ENCODE measurements at regions of chr4 and their contacts with region 1.

Region 1: DNA sequence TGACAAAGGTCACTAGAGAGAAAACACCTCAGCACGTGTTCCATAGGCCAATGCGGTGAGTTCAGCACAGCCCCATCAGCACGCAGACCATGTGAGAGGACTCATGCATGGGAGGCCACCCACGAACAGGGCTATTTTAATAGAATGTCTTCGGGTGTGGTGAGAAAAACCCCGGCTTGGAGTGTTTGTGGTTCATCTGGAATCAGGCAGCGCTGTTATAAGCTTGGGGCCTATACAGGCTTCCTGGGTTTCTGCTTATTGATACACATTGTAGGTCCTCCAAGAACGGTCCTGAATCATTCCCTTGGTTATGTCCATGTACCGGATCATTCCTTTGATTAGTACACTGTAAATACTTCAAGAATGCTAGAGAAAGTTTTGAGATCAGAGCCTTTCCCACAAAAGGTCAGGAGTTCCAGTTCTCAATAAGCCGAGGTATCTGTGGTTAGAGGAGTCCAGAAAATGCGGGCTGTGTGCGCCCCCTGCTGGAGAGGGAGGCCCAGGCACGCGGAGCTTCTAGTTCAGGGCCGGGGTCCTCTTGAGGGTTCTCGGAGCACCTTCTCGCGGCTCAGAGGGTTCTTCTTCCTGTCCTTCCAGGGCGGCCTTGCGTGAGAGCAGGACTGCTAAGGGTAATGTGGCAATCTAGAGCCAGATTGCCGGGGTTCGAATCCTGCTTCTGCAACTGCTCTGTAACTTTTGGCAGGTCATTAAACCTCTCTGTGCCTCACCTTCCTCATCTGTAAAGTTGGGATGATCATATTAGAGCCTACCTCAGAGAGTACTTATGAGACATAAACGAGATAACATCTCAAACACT is 51.8 kb downstream of the TLR10 start:
- DNase-seq: peak; percentile 79 to 87 (median 84)
- ATAC-seq: peak; percentile 85
- H3K4me3 ChIP-seq: no peak overlapping the region
- H3K27ac ChIP-seq: no peak overlapping the region
- H3K4me1 ChIP-seq: peaks cover 8% of the 10 kb centered on the region
- H3K27me3 ChIP-seq: no peaks in the 10 kb centered on the region
- CTCF ChIP-seq: peak; percentile 83 to 94 (median 91)
- POLR2A ChIP-seq: no peak

Region 2: DNA sequence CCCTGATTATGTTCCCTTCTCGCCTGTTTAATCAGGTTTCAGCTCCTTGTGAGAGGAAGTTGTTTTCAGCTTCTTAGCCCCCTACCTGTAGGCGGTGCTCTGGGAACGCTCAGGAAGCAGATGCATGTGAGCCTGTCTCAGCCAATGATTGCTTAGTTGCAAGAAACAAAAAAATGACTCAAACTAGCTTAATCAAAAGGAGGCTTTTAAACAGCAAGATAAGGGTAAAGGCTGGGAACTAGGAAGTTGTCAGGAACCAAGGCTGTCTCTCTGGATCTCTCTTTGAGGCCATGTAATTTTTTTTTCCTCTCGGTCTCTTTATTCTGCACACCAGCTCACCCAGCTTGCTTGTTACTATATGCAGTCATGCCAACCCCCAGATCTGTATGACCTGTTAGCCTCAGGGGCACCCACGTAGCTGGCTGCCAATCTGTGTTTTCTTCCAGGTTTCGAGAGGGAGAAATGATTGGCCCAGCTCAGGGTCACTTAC is 661.7 kb before region 1 on chr4:
- intact Hi-C with region 1: loop called (anchors 5 kb)
- DNase-seq: peak; percentile 81 to 90 (median 84)
- ATAC-seq: peak; percentile 94
- H3K4me3 ChIP-seq: no peak overlapping the region
- H3K27ac ChIP-seq: peak overlapping the region; percentile 64 to 87 (median 76)
- H3K4me1 ChIP-seq: peaks cover 44% of the 10 kb centered on the region
- H3K27me3 ChIP-seq: no peaks in the 10 kb centered on the region
- CTCF ChIP-seq: peak; percentile 41 to 95 (median 91)
- POLR2A ChIP-seq: peak in 1 of 3 donors; percentile 32

Region 3: DNA sequence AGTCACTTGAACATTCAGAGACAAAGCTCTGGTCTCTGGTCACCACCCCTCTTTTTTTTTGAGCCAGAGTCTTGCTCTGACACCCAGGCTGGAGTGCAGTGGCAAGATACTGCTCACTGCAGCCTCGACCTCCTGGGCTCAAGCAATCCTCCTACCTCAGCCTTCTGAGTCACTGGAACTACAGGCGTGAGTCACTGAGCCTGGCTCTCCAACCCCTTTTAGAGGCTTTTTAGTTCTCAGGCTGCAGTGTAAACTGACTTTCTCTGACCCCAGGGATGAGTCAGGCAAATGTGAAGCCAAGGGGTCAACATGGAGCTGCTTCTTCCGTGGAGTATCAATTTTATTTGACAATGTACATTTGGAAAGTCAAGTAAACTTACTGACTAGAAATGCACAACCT is 541.6 kb before region 1 on chr4:
- intact Hi-C with region 1: loop called (anchors 5 kb)
- DNase-seq: no peak
- ATAC-seq: no peak
- H3K4me3 ChIP-seq: no peak overlapping the region
- H3K27ac ChIP-seq: no peak overlapping the region
- H3K4me1 ChIP-seq: no peaks in the 10 kb centered on the region
- H3K27me3 ChIP-seq: no peaks in the 10 kb centered on the region
- CTCF ChIP-seq: no peak
- POLR2A ChIP-seq: no peak

Region 4: DNA sequence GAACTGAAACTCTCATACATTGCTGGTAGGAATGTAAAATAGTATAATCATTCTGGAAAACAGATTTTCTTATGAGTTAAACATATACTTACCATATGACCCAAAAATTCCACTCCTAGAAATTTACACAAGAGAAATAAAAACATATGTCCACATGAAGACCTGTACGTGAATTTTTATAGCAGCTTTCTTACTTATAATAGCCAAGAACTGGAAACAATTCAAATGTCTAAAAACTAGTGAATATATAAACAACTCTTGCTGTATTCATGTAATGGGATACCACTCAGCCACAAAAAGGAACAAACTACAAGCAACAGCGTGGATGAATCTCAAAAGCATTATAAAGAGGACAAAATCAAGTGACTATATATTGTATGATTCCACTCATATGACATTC is 273.7 kb after region 1 on chr4:
- intact Hi-C with region 1: no loop called
- DNase-seq: no peak
- ATAC-seq: no peak
- H3K4me3 ChIP-seq: no peak overlapping the region
- H3K27ac ChIP-seq: no peak overlapping the region
- H3K4me1 ChIP-seq: no peaks in the 10 kb centered on the region
- H3K27me3 ChIP-seq: no peaks in the 10 kb centered on the region
- CTCF ChIP-seq: no peak
- POLR2A ChIP-seq: no peak